K562 (cell line): ENCODE measurements at regions of chr12 and their contacts with region 1.

Region 1: DNA sequence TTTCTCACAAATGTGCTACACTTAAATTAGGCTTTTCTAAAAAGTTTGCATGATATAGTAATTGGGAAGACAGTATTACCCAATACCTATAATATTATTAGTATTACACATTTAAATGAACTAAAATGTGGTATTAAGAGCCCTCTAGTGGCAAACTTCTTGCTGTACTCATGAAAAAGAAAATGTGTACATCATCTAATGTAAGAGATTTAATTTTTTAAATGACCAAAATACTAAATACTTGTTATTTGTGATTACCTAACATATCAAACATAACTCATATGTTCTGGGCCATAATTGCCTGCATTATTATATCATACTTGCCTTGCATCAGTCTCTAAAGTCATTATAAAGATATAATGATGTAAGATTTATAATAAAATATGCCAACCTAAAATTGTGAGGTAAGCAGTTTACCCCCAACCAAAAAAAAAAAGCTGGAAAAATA is 64.2 kb downstream of the DNAI7 start:
- DNase-seq: peak; percentile 15 to 29 (median 22)
- ATAC-seq: no peak; the same call in 2 of the 3 replicates
- H3K4me3 ChIP-seq: no peak overlapping the region
- H3K27ac ChIP-seq: no peak overlapping the region
- H3K4me1 ChIP-seq: no peaks in the 10 kb centered on the region
- H3K27me3 ChIP-seq: 0 out of 5 replicates have a peak, but pooled peaks cover 0 to under 1% of the 10 kb centered on the region in 2 experiments
- CTCF ChIP-seq: peak in 2 of 3 experiments; percentile 39 to 73; a peak in 3 of 6 replicates
- EP300 ChIP-seq: no peak
- POLR2A ChIP-seq: no peak
- RAD21 ChIP-seq: peak; percentile 86 to 91

Region 2: GRCh38 chr12:24840046-24840800 is 290.5 kb before region 1 on chr12:
- CTCF ChIA-PET with region 1: no interaction called
- POLR2A ChIA-PET with region 1: no interaction called
- in situ Hi-C with region 1: no loop called
- intact Hi-C with region 1: loop called (anchors 10 kb)
- DNase-seq: no peak
- ATAC-seq: no peak
- H3K4me3 ChIP-seq: no peak overlapping the region
- H3K27ac ChIP-seq: no peak overlapping the region
- H3K4me1 ChIP-seq: no peaks in the 10 kb centered on the region
- H3K27me3 ChIP-seq: no peaks in the 10 kb centered on the region
- CTCF ChIP-seq: no peak
- EP300 ChIP-seq: no peak
- POLR2A ChIP-seq: no peak
- RAD21 ChIP-seq: no peak

Region 3: DNA sequence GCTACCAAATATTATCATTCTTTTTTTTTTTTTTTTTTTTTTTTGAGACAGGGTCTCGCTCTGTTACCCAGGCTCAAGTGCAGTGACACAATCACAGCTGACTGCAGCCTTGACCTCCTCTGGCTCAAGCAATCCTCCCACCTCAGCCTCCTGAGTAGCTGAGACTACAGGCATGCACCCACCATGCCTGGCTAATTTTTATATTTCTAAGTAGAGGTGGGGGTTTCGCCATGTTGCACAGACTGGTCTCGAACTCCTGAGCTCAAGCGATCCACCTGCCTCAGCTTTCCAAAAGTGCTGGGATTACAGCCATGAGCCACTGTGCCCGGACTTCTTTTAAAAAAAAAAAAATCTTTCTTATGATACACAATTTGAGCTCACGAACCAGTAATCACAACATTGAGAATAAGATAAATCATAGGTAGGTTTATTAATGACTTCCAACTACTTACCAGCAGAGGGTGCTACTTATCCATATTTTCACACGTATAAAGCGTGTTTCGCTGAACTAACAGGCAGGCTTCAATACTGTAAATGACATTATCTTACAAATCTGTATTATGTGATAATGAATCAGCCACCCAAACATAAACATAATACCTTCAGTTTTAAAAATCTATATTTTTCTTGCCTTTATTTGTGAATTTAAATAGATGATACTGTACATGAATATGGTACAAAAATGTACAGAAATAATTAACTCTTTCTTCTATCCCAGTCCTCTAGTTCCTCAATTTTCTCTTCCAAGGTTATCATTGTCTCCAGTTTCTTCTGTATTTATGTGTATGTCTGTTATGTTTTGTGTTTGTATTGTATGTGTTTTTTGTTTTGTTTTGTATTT is 139.3 kb before region 1 on chr12:
- CTCF ChIA-PET with region 1: interaction called, 17 read pairs
- POLR2A ChIA-PET with region 1: no interaction called
- in situ Hi-C with region 1: loop called (anchors 5 kb)
- intact Hi-C with region 1: loop called (anchors 1 kb)
- DNase-seq: peak; percentile 25 to 66 (median 39)
- ATAC-seq: peak; percentile 84
- H3K4me3 ChIP-seq: no peak overlapping the region
- H3K27ac ChIP-seq: no peak overlapping the region
- H3K4me1 ChIP-seq: no peaks in the 10 kb centered on the region
- H3K27me3 ChIP-seq: peaks cover 0 to 7% of the 10 kb centered on the region in 2 experiments; a peak in 2 of 5 replicates
- CTCF ChIP-seq: peak; percentile 47 to 78 (median 51); a peak in 5 of 6 replicates
- EP300 ChIP-seq: no peak
- POLR2A ChIP-seq: no peak
- RAD21 ChIP-seq: peak; percentile 94 to 97

Region 4: DNA sequence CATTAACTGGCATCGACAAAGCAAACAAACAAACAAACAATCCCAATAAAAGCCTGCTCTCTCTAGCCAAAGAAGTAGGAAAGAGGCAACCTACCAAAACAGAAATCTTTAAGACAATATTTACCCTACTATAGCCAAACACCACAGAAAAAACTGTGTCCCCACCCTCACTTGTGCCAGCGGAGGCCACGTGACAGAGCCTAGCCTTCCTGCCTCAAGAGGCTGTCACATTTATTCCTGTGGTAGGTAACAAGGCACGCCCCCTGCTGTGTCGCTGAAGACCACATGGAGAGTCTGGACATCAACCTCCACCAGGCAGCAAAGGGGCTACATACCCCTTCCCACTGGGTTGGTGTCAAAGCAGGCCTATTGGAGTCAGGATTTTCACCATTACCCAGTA is 274.2 kb after region 1 on chr12:
- CTCF ChIA-PET with region 1: no interaction called
- POLR2A ChIA-PET with region 1: no interaction called
- in situ Hi-C with region 1: no loop called
- intact Hi-C with region 1: no loop called
- DNase-seq: peak in 2 of 4 experiments; percentile 7 to 20
- ATAC-seq: peak; percentile 65; the same call in 1 of the 3 replicates
- H3K4me3 ChIP-seq: no peak overlapping the region
- H3K27ac ChIP-seq: no peak overlapping the region
- H3K4me1 ChIP-seq: no peaks in the 10 kb centered on the region
- H3K27me3 ChIP-seq: no peaks in the 10 kb centered on the region
- CTCF ChIP-seq: no peak
- EP300 ChIP-seq: no peak
- POLR2A ChIP-seq: no peak
- RAD21 ChIP-seq: no peak